Calu3 (cell line): ENCODE measurements at regions of chr11 and their contacts with region 1.

Region 1: DNA sequence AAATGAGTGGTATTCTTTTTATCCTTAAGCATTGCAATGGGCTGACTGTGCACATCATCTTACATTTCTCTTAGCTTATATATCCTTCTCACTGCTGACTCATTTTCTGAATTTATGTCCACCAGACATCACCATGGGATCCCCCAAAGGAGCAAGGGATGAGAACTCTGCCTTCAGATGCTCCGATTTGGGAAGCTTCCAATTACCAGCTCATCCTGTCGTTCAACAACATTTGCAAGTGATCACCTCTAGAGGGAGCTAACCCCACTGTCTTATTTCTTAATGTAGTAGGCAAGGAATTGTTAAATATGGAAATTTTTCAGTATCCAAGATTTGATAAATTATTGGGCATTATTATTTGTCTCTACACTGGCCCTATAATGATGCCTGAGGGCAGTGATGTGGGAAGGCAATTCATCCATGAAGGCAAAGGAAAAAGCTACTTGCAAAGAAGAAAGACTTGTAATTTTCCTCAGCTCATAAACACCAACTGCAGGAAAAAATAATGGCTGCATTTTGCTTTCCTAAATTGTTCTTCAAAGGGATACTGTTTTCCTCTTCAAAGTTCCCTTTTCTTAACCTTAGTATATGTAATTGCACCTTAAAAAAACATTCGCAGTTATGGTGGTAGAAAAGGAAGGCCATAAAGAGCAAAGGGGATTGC is 102.4 kb upstream of the FSHB start:
- DNase-seq: peak; percentile 4
- H3K4me3 Mint-ChIP-seq: no peak overlapping the region
- H3K27ac Mint-ChIP-seq: no peak overlapping the region
- H3K4me1 Mint-ChIP-seq: no peaks in the 10 kb centered on the region
- H3K27me3 Mint-ChIP-seq: no peaks in the 10 kb centered on the region
- CTCF ChIP-seq: peak; percentile 44

Region 2: DNA sequence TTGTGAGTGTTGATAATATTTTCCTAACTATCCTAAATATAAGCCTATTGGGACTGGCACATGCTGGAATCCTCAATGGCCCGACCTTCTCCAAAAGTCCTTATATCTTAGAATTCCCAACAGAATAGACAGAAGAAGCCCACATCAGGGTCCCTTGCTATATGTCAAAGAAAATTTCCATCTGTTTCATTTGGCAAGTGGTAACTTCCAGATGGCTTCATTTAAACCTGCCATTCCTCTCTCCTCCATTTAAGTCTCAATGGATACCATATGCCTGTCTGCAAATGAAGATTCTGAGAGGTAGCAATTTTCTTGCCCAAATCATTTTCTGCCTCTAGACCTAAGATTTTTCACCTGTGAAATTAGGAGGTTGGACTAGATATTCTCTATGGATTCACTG is 38.5 kb before region 1 on chr11:
- CTCF ChIA-PET with region 1: no interaction called
- intact Hi-C with region 1: no loop called
- DNase-seq: no peak
- H3K4me3 Mint-ChIP-seq: no peak overlapping the region
- H3K27ac Mint-ChIP-seq: no peak overlapping the region
- H3K4me1 Mint-ChIP-seq: no peaks in the 10 kb centered on the region
- H3K27me3 Mint-ChIP-seq: no peaks in the 10 kb centered on the region
- CTCF ChIP-seq: no peak

Region 3: GRCh38 chr11:30143098-30143705 is 14.8 kb after region 1 on chr11:
- CTCF ChIA-PET with region 1: interaction called, 12 read pairs
- intact Hi-C with region 1: no loop called
- DNase-seq: peak; percentile 11
- H3K4me3 Mint-ChIP-seq: no peak overlapping the region
- H3K27ac Mint-ChIP-seq: no peak overlapping the region
- H3K4me1 Mint-ChIP-seq: no peaks in the 10 kb centered on the region
- H3K27me3 Mint-ChIP-seq: no peaks in the 10 kb centered on the region
- CTCF ChIP-seq: peak; percentile 44

Region 4: DNA sequence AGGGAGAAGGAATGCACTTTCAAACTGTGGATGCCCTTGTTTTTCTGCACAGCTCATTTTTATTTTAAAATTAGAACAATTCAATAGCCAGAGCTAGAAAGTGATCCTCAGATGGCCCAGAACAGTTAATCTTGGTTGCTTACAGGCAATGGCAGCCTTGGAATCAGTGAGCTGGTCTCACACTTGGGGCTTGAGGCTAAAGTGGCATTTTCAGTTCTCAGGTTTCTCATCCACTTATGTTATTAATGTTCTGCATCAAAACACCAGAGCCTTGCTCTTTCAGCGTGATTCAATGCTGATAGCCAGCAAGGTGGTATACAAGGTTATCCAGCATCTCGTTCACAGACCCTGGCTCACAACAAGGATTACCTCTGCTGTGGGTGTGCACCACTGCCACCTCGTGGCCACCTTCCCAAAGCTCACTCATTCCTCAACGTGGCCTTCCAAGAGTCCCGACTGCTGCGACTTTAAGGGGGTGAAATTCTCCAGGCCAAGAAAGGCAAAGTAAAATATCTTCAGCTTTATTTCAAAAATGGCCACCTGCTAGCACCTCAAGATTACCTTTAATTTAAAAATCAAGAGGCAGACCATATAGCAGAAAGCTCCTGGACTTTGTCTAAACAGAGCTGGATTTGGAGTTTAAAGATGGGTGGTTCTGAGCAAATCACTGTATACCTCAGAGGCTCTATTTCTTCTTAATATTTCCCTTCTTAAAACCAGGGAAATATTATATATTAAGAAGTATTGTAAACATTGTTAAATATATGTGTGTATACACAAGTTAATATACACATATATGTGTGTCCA is 68.2 kb after region 1 on chr11:
- CTCF ChIA-PET with region 1: interaction called, 9 read pairs
- intact Hi-C with region 1: loop called (anchors 1 kb)
- DNase-seq: peak; percentile 67
- H3K4me3 Mint-ChIP-seq: no peak overlapping the region
- H3K27ac Mint-ChIP-seq: no peak overlapping the region
- H3K4me1 Mint-ChIP-seq: no peaks in the 10 kb centered on the region
- H3K27me3 Mint-ChIP-seq: no peaks in the 10 kb centered on the region
- CTCF ChIP-seq: peak; percentile 58

Region 5: GRCh38 chr11:30917859-30918478 is 789.6 kb after region 1 on chr11:
- CTCF ChIA-PET with region 1: no interaction called
- intact Hi-C with region 1: loop called (anchors 5 kb)
- DNase-seq: peak; percentile 24
- H3K4me3 Mint-ChIP-seq: no peak overlapping the region
- H3K27ac Mint-ChIP-seq: no peak overlapping the region
- H3K4me1 Mint-ChIP-seq: no peaks in the 10 kb centered on the region
- H3K27me3 Mint-ChIP-seq: peaks cover 36% of the 10 kb centered on the region
- CTCF ChIP-seq: peak; percentile 68